ENCODE measurements at regions of chr6 and their contacts with region 1.

Region 1: DNA sequence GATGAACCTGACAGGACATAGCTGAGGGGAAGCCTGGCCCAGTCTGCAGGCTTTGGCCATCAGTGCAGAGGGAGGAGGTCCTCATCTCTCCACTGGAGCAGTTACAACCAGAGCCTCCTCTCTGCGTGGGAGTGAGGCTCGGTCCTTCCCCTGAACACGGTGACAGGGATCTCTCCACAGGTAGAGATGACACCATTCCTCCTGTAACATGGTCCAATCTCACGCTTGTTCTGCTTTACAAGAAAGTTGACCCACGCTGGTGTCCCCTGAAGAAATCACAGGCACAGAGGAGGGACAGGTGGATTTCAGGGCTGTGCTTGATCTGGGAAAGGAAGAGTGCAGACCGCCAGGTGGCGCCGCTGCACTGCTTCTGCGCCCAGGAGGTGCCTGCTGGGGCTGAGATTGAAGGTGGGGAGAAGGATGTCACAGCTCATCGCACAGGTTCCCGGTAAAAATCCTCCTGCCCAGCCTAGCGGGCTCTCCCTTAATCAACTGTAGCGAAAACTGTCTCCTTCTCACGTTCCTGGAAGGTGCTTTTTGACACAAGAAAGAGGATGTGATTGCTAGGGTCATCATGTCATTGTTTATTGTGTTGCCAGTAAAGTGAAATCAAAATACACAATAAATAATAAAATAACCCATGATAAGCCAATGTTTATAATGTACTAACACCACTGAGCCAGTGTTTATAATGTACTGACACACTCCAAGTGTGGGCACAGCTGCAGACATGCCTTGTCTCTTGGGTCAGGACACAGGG is 20.4 kb downstream of the HLA-G start:
- DNase-seq: peak; percentile 88
- H3K4me3 Mint-ChIP-seq: no peak overlapping the region
- H3K27ac Mint-ChIP-seq: no peak overlapping the region
- H3K4me1 Mint-ChIP-seq: peaks cover 45% of the 10 kb centered on the region
- H3K27me3 Mint-ChIP-seq: peaks cover 56% of the 10 kb centered on the region

Region 2: GRCh38 chr6:29976588-29977424 is 128.8 kb after region 1 on chr6:
- CTCF ChIA-PET with region 1: interaction called, 10 read pairs
- POLR2A ChIA-PET with region 1: no interaction called
- DNase-seq: peak; percentile 68
- H3K4me3 Mint-ChIP-seq: peak overlapping the region; percentile 75
- H3K27ac Mint-ChIP-seq: no peak overlapping the region
- H3K4me1 Mint-ChIP-seq: peaks cover 51% of the 10 kb centered on the region
- H3K27me3 Mint-ChIP-seq: peaks cover 68% of the 10 kb centered on the region

Region 3: GRCh38 chr6:30013291-30013922 is 165.4 kb after region 1 on chr6:
- CTCF ChIA-PET with region 1: interaction called, 15 read pairs
- POLR2A ChIA-PET with region 1: no interaction called
- DNase-seq: peak; percentile 53
- H3K4me3 Mint-ChIP-seq: no peak overlapping the region
- H3K27ac Mint-ChIP-seq: no peak overlapping the region
- H3K4me1 Mint-ChIP-seq: no peaks in the 10 kb centered on the region
- H3K27me3 Mint-ChIP-seq: peaks cover 2% of the 10 kb centered on the region

Measured in activated CD4-positive, alpha-beta memory T cell treated with anti-CD3 and anti-CD28 coated beads, Interleukin-2, amount 10 ng/mL, durations not matched to agents 7 days and 5 days (primary cell).